Naive thymus-derived CD4-positive, alpha-beta T cell (primary cell): ENCODE measurements at regions of chr3 and their contacts with region 1.

Region 1: DNA sequence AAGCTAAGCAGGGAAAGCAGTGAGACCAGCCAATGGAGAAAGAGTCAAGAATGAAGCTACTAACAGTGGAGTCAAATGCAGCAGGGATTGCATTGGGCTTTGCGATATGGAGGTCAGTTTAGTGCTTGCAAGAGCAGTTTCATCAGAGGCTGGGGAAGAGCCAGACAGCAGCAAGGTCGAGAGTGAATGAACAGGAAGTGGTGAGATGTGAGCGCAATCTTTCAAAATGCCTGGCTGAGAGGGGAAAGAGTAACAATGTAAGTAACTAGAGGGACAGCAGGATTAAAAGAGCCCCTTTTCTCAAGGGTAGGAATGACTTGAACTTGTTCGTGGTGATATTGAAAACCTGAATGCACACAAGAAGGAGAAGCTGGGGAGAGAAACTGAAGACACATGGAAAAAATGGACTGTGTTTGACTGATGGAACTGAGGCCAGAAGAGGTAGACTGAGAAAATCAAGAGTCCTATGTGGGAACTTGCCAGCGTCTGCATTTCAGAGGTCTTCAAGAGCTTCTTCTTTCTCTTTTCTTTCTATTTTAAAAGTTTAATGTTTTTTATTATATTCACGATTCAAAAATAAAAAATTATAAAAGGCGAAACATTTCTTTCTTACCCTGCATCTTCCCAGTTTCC is 30.6 kb upstream of the GPR160 start:
- DNase-seq: peak in 8 of 9 donors; percentile 27 to 61 (median 48)
- ATAC-seq: peak; percentile 88
- H3K4me3 ChIP-seq: no peak overlapping the region
- H3K4me3 Mint-ChIP-seq: peak overlapping the region; percentile 38 to 76 (median 64)
- H3K27ac ChIP-seq: peak overlapping the region; percentile 19
- H3K27ac Mint-ChIP-seq: peak overlapping the region; percentile 26 to 91 (median 78)
- H3K4me1 ChIP-seq: peaks cover 4 to 34% of the 10 kb centered on the region in 2 donors
- H3K4me1 Mint-ChIP-seq: peaks cover 32 to 64% (median 50%) of the 10 kb centered on the region in 7 donors
- H3K27me3 ChIP-seq: no peaks in the 10 kb centered on the region
- H3K27me3 Mint-ChIP-seq: peaks cover 0 to 2% (median 0%) of the 10 kb centered on the region in 5 donors

Region 2: GRCh38 chr3:170021083-170021482 is 13.9 kb after region 1 on chr3:
- CTCF ChIA-PET with region 1: interaction called, 7 read pairs
- POLR2A ChIA-PET with region 1: interaction called, 25 read pairs
- intact Hi-C with region 1: loop called in 1 of 2 experiments (anchors 2 kb)
- DNase-seq: peak in 6 of 9 donors; percentile 21 to 48 (median 40)
- ATAC-seq: peak; percentile 61
- H3K4me3 ChIP-seq: no peak overlapping the region
- H3K4me3 Mint-ChIP-seq: peak overlapping the region in 7 of 10 donors; percentile 3 to 71 (median 42)
- H3K27ac ChIP-seq: no peak overlapping the region
- H3K27ac Mint-ChIP-seq: peak overlapping the region in 8 of 9 donors; percentile 18 to 92 (median 73)
- H3K4me1 ChIP-seq: peaks cover 0 to 9% of the 10 kb centered on the region in 2 donors
- H3K4me1 Mint-ChIP-seq: peaks cover 10 to 64% (median 30%) of the 10 kb centered on the region in 7 donors
- H3K27me3 ChIP-seq: no peaks in the 10 kb centered on the region
- H3K27me3 Mint-ChIP-seq: peaks cover 0 to 17% (median 0%) of the 10 kb centered on the region in 5 donors

Region 3: GRCh38 chr3:170982733-170983132 is 975.6 kb after region 1 on chr3:
- CTCF ChIA-PET with region 1: no interaction called
- POLR2A ChIA-PET with region 1: no interaction called
- intact Hi-C with region 1: no loop called
- DNase-seq: no peak
- ATAC-seq: no peak
- H3K4me3 ChIP-seq: no peak overlapping the region
- H3K4me3 Mint-ChIP-seq: no peak overlapping the region
- H3K27ac ChIP-seq: no peak overlapping the region
- H3K27ac Mint-ChIP-seq: no peak overlapping the region
- H3K4me1 ChIP-seq: no peaks in the 10 kb centered on the region
- H3K4me1 Mint-ChIP-seq: no peaks in the 10 kb centered on the region
- H3K27me3 ChIP-seq: no peaks in the 10 kb centered on the region
- H3K27me3 Mint-ChIP-seq: peaks cover 11 to 23% (median 16%) of the 10 kb centered on the region in 5 donors